Activated CD4-positive, alpha-beta T cell treated with anti-CD3 and anti-CD28 coated beads for 36 hours (primary cell): ENCODE measurements at regions of chr17 and their contacts with region 1.

Region 1: GRCh38 chr17:30104575-30105339 is 11.9 kb upstream of the NSRP1 start:
- DNase-seq: peak; percentile 81
- ATAC-seq: peak; percentile 97
- H3K4me3 Mint-ChIP-seq: peak overlapping the region; percentile 67
- H3K27ac Mint-ChIP-seq: peak overlapping the region; percentile 24
- H3K4me1 Mint-ChIP-seq: peaks cover 5% of the 10 kb centered on the region
- H3K27me3 Mint-ChIP-seq: peaks cover 2% of the 10 kb centered on the region

Region 2: DNA sequence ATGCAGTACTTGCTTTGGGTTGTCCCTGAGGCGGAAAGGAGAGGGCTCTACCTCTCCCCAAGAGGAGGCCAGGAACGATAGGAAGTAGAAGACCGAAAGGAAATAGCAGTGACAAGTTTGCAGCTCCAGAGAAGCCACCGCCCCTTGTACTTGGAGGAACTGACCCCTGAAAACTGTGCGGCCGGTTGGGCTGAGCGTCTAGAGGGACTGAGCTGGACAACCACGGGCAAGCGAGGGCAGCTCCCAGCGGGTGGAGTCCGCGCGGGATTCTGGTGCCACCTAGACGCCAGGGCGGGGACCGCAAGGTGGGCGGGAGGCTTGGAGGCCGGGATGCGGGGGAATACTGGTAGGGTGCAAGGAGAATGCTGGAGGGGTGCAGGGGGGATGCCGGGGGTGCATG is 132.0 kb after region 1 on chr17:
- CTCF ChIA-PET with region 1: interaction called, 11 read pairs
- POLR2A ChIA-PET with region 1: no interaction called
- intact Hi-C with region 1: loop called (anchors 2 to 5 kb)
- DNase-seq: peak; percentile 55
- ATAC-seq: no peak
- H3K4me3 Mint-ChIP-seq: no peak overlapping the region
- H3K27ac Mint-ChIP-seq: no peak overlapping the region
- H3K4me1 Mint-ChIP-seq: peaks cover 11% of the 10 kb centered on the region
- H3K27me3 Mint-ChIP-seq: peaks cover 59% of the 10 kb centered on the region